IMR-90 (cell line): ENCODE measurements at regions of chr22 and their contacts with region 1.

Region 1: DNA sequence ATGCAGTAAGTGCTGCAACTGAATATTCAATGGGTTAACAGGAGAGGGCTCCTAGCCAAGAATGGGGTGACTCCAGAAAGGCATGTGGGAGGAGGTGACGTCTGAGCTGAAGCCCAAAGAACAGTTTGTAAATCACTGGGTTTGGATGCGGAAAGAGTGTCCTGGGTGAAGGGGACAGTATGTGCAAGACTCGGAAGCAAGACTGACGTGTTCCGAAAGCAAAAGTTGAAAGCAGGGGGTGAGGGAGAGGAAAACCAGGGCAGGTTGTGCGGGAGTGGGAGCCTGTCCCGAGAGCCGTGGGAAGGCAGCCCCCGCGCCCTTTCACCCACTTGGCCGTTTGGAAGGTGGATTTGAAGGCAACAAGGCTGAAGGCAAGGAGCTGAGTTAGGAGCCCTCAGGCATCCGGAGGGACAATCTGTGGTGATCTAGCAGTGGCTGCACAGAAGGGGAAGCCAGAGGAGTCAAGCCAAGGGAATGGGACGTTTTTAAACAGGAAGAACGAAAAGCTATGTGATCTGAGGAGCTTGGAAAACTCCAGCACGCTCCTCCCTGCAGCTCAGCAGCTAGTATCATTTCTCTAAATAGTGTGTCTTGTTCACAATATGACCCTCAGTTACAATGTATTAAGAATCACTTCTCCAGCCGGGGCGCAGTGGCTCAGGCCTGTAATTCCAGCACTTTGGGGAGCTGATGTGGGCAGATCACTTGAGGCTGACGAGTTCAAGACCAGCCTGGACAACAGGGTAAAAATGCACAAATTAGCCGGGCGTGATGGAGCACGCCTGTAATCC is 7.7 kb downstream of the SLC25A18 start:
- DNase-seq: peak; percentile 83
- ATAC-seq: peak; percentile 75
- H3K4me3 ChIP-seq: peak overlapping the region; percentile 44
- H3K27ac ChIP-seq: peak overlapping the region; percentile 76
- H3K4me1 ChIP-seq: peaks cover 12% of the 10 kb centered on the region
- H3K27me3 ChIP-seq: no peaks in the 10 kb centered on the region
- CTCF ChIP-seq: no peak
- POLR2A ChIP-seq: no peak
- RAD21 ChIP-seq: no peak

Region 2: GRCh38 chr22:17628304-17629166 is 57.5 kb after region 1 on chr22 and contains the start of gene ATP6V1E1:
- CTCF ChIA-PET with region 1: no interaction called
- POLR2A ChIA-PET with region 1: no interaction called
- dilution Hi-C with region 1: no loop called
- in situ Hi-C with region 1: no loop called
- intact Hi-C with region 1: loop called (anchors 5 kb)
- DNase-seq: peak; percentile 96
- ATAC-seq: peak; percentile 99
- H3K4me3 ChIP-seq: peak within 1 kb of the TSS; percentile 69
- H3K27ac ChIP-seq: peak within 1 kb of the TSS; percentile 97
- H3K4me1 ChIP-seq: no peaks in the 10 kb centered on the region; the same call in 1 of the 2 replicates
- H3K27me3 ChIP-seq: no peaks in the 10 kb centered on the region
- CTCF ChIP-seq: no peak
- POLR2A ChIP-seq: peak; percentile 88
- RAD21 ChIP-seq: no peak
- total RNA-seq, gene ATP6V1E1: 144 and 151 TPM in 2 replicates

Region 3: DNA sequence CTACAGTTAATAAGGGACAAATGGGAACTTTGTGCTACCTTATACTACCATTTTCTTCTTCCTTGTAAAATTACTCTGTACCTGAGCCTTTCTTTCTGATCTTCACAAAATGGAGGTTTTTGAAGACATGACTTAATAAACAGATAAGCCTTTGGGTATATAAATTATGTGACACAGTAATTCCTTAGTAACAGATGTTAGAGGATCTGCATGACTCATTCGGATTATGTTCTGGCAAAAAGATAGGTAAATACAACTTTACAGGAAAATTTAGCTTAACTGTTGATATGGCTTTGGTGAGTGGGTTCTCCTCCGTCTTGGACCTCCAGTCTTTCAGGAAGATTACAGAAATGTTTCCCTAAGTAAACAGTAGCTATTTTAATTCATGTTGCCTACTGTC is 141.4 kb after region 1 on chr22:
- CTCF ChIA-PET with region 1: no interaction called
- POLR2A ChIA-PET with region 1: no interaction called
- dilution Hi-C with region 1: no loop called
- in situ Hi-C with region 1: no loop called
- intact Hi-C with region 1: loop called (anchors 10 kb)
- DNase-seq: peak; percentile 77
- ATAC-seq: peak; percentile 42
- H3K4me3 ChIP-seq: no peak overlapping the region
- H3K27ac ChIP-seq: no peak overlapping the region
- H3K4me1 ChIP-seq: peaks cover 14% of the 10 kb centered on the region
- H3K27me3 ChIP-seq: no peaks in the 10 kb centered on the region
- CTCF ChIP-seq: no peak
- POLR2A ChIP-seq: no peak
- RAD21 ChIP-seq: no peak

Region 4: DNA sequence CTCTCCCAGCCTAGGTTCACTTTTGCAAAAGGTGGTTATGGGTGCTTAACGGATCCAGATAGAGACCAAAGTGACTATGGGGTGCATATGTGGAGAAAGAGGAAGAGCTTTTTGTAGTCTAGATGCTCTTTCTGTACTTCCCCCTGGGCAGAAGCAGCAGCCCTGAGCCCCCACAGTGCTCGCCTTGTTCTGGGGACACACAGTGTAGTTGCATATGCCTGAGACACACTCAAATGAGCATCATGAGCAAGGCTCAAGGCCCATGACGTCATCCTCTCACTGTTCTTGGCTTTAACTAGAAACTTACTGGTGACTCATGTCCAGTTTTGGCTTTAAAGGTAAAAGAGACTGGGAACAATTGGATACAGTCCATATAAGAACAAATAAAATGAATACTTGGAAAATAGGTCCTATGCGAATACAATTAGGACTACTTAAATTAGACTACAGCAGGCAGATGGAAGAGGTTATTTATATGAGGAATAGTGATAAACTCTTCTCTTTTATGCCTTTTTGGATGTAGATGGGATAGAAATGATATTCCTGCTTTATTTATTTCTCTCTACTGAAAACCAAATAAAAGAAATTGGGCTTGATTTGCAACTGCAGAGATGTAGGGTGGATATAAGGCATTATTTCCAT is 486.6 kb after region 1 on chr22:
- CTCF ChIA-PET with region 1: no interaction called
- POLR2A ChIA-PET with region 1: no interaction called
- dilution Hi-C with region 1: no loop called
- in situ Hi-C with region 1: loop called (anchors 25 kb)
- intact Hi-C with region 1: no loop called
- DNase-seq: peak; percentile 100
- ATAC-seq: peak; percentile 71
- H3K4me3 ChIP-seq: no peak overlapping the region
- H3K27ac ChIP-seq: no peak overlapping the region; the same call in 1 of the 2 replicates
- H3K4me1 ChIP-seq: peaks cover 20% of the 10 kb centered on the region
- H3K27me3 ChIP-seq: no peaks in the 10 kb centered on the region
- CTCF ChIP-seq: no peak
- POLR2A ChIP-seq: no peak
- RAD21 ChIP-seq: no peak